ENCODE measurements at regions of chr13 and their contacts with region 1.

Region 1: DNA sequence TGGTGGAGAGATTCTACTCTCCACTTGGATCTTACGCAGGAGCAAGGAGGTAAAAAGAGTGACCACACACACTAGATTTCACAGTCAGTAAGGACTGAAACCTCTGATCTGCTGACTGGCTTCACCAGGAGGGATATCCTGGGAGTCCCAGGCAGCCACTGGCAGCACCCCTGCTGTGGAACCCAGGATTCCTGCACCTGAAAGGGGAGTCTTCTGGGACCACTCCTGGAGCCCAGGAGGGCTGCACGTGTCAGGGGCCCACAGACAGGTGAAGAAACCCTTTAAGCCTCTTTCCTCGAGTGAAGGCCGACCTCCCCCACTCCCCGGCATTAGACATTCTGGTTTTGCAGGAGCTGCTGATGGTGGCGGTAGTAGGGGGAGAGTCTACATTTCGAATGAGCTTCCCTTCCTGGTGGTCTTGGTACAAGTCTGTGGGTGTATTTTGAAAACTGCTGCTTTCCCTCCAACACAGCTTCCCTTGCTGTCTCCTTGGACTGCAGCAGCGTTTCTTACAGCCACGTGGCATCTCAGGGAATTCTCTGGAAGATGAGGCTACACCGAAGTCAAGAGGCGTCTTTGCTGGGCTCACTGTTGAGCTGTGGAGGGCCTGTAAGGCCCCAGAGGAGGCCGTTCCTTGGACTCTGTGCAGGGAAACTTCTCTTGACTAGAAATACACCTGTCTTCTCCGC is 62.6 kb downstream of the ALOX5AP start:
- DNase-seq: no peak
- ATAC-seq: no peak
- H3K4me3 ChIP-seq: no peak overlapping the region
- H3K27ac ChIP-seq: no peak overlapping the region
- H3K4me1 ChIP-seq: peaks cover 28% of the 10 kb centered on the region
- H3K27me3 ChIP-seq: no peaks in the 10 kb centered on the region
- CTCF ChIP-seq: no peak
- POLR2A ChIP-seq: no peak
- RAD21 ChIP-seq: no peak

Region 2: DNA sequence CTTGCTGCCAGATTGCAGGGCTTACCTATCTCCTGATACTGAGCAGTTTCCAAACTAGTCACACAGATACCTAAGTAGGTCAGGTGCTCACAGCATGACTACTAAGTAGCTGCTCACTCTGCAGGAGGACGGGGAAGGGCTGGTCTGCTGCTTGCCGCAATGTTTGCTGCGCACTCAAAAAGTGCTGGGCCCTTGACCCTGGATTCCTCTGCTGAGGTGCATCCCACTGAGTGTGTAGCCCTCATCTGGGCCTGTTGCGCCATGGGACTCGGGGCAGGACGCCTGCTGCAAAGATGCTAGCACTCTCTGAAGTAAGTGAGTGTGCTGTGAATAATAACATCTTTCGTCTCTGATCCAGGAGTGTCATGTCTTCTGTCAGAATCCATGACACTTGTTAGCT is 48.9 kb after region 1 on chr13:
- CTCF ChIA-PET with region 1: no interaction called
- POLR2A ChIA-PET with region 1: interaction called, 10 read pairs
- dilution Hi-C with region 1: no loop called
- in situ Hi-C with region 1: no loop called
- intact Hi-C with region 1: no loop called
- DNase-seq: no peak
- ATAC-seq: no peak
- H3K4me3 ChIP-seq: no peak overlapping the region
- H3K27ac ChIP-seq: peak overlapping the region; percentile 59
- H3K4me1 ChIP-seq: peaks cover 20% of the 10 kb centered on the region
- H3K27me3 ChIP-seq: no peaks in the 10 kb centered on the region
- CTCF ChIP-seq: no peak
- POLR2A ChIP-seq: no peak
- RAD21 ChIP-seq: no peak

Region 3: GRCh38 chr13:30905932-30906383 is 108.0 kb after region 1 on chr13 and contains the start of gene MEDAG:
- CTCF ChIA-PET with region 1: no interaction called
- POLR2A ChIA-PET with region 1: no interaction called
- dilution Hi-C with region 1: no loop called
- in situ Hi-C with region 1: no loop called
- intact Hi-C with region 1: no loop called
- DNase-seq: peak; percentile 57
- ATAC-seq: peak; percentile 40
- H3K4me3 ChIP-seq: no peak within 1 kb of the TSS
- H3K27ac ChIP-seq: no peak within 1 kb of the TSS
- H3K4me1 ChIP-seq: peaks cover 18% of the 10 kb centered on the region
- H3K27me3 ChIP-seq: no peaks in the 10 kb centered on the region; the same call in 1 of the 2 replicates
- CTCF ChIP-seq: no peak
- POLR2A ChIP-seq: no peak
- RAD21 ChIP-seq: no peak
- total RNA-seq, gene MEDAG: 0.28 and 0.36 TPM in 2 replicates

Measured in IMR-90 (cell line).